HAP-1 (cell line): ENCODE measurements at regions of chr12 and their contacts with region 1.

Region 1: GRCh38 chr12:50825372-50825838 is 17.3 kb upstream of the TMPRSS12 start:
- DNase-seq: peak in 1 of 2 experiments; percentile 73
- H3K4me3 ChIP-seq: no peak overlapping the region
- H3K4me1 ChIP-seq: peaks cover 3% of the 10 kb centered on the region
- H3K27me3 ChIP-seq: no peaks in the 10 kb centered on the region

Region 2: GRCh38 chr12:50992819-50993218 is 167.4 kb after region 1 on chr12:
- in situ Hi-C with region 1: loop called (anchors 10 kb)
- DNase-seq: no peak
- H3K4me3 ChIP-seq: no peak overlapping the region
- H3K4me1 ChIP-seq: no peaks in the 10 kb centered on the region
- H3K27me3 ChIP-seq: no peaks in the 10 kb centered on the region

Region 3: DNA sequence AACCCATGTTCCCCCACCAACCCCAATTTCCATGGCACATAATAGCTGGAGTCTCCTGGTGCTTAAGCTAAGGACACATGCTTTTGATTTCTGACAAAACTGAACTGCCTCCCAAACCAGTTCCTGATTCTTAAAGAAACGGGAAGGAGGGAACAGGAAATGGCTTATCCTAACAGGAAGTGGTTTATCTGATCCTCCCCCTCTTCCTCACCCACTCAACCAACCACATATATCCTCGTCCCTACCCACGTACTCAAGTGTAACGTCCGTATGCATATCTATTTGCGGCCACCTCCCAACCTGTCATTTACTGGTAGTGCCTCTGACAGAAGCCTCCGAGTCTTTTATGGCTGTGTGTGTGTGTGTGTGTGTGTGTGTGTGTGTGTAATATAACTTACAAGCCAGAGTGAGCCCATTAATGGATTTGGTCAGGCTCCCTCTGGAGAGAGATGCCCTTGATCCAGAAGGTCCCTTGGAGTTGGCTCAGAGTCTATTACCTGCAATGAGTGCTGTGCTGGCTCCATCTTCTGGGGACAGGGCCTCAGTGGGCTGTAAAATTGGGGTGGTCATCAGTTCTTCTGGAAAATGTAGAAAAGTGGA is 420.9 kb after region 1 on chr12:
- in situ Hi-C with region 1: no loop called
- DNase-seq: no peak
- H3K4me3 ChIP-seq: no peak overlapping the region
- H3K4me1 ChIP-seq: no peaks in the 10 kb centered on the region
- H3K27me3 ChIP-seq: no peaks in the 10 kb centered on the region

Region 4: GRCh38 chr12:51341259-51342007 is 516.0 kb after region 1 on chr12:
- in situ Hi-C with region 1: loop called (anchors 25 kb)
- DNase-seq: peak; percentile 80
- H3K4me3 ChIP-seq: no peak overlapping the region
- H3K4me1 ChIP-seq: no peaks in the 10 kb centered on the region; the same call in 1 of the 2 replicates
- H3K27me3 ChIP-seq: no peaks in the 10 kb centered on the region